Activated naive CD4-positive, alpha-beta T cell treated with anti-CD3 and anti-CD28 coated beads for 36 hours (primary cell): ENCODE measurements at regions of chr12 and their contacts with region 1.

Region 1: GRCh38 chr12:32106517-32107358 is at the start of gene BICD1:
- DNase-seq: peak; percentile 85
- H3K4me3 Mint-ChIP-seq: peak within 1 kb of the TSS; percentile 90
- H3K27ac Mint-ChIP-seq: peak within 1 kb of the TSS; percentile 84
- H3K4me1 Mint-ChIP-seq: peaks cover 18% of the 10 kb centered on the region
- H3K27me3 Mint-ChIP-seq: no peaks in the 10 kb centered on the region
- total RNA-seq, gene BICD1: 14.4 to 16.4 TPM

Region 2: GRCh38 chr12:31325877-31326631 is 780.7 kb before region 1 on chr12 and contains the start of gene SINHCAF:
- CTCF ChIA-PET with region 1: no interaction called
- intact Hi-C with region 1: loop called (anchors 10 kb)
- DNase-seq: peak; percentile 99
- H3K4me3 Mint-ChIP-seq: peak within 1 kb of the TSS; percentile 96
- H3K27ac Mint-ChIP-seq: peak within 1 kb of the TSS; percentile 99
- H3K4me1 Mint-ChIP-seq: peaks cover 20% of the 10 kb centered on the region
- H3K27me3 Mint-ChIP-seq: no peaks in the 10 kb centered on the region
- total RNA-seq, gene SINHCAF: 158 to 169 TPM

Region 3: GRCh38 chr12:31736472-31736871 is 370.3 kb before region 1 on chr12:
- CTCF ChIA-PET with region 1: no interaction called
- intact Hi-C with region 1: loop called (anchors 2 kb)
- DNase-seq: peak; percentile 87
- H3K4me3 Mint-ChIP-seq: no peak overlapping the region
- H3K27ac Mint-ChIP-seq: peak overlapping the region; percentile 86
- H3K4me1 Mint-ChIP-seq: peaks cover 57% of the 10 kb centered on the region
- H3K27me3 Mint-ChIP-seq: no peaks in the 10 kb centered on the region

Region 4: GRCh38 chr12:31959161-31959700 is 147.5 kb before region 1 on chr12 and contains the start of gene RESF1:
- CTCF ChIA-PET with region 1: no interaction called
- intact Hi-C with region 1: loop called (anchors 2 kb)
- DNase-seq: peak; percentile 88
- H3K4me3 Mint-ChIP-seq: peak within 1 kb of the TSS; percentile 94
- H3K27ac Mint-ChIP-seq: peak within 1 kb of the TSS; percentile 99
- H3K4me1 Mint-ChIP-seq: peaks cover 66% of the 10 kb centered on the region
- H3K27me3 Mint-ChIP-seq: no peaks in the 10 kb centered on the region
- total RNA-seq, gene RESF1: 65.6 to 73.5 TPM

Region 5: GRCh38 chr12:32062881-32063280 is 43.9 kb before region 1 on chr12:
- CTCF ChIA-PET with region 1: interaction called, 12 read pairs
- intact Hi-C with region 1: loop called (anchors 2 kb)
- DNase-seq: no peak
- H3K4me3 Mint-ChIP-seq: no peak overlapping the region
- H3K27ac Mint-ChIP-seq: no peak overlapping the region
- H3K4me1 Mint-ChIP-seq: peaks cover 11% of the 10 kb centered on the region
- H3K27me3 Mint-ChIP-seq: no peaks in the 10 kb centered on the region

Region 6: GRCh38 chr12:32181498-32182175 is 74.9 kb after region 1 on chr12:
- CTCF ChIA-PET with region 1: no interaction called
- intact Hi-C with region 1: no loop called
- DNase-seq: no peak
- H3K4me3 Mint-ChIP-seq: no peak overlapping the region
- H3K27ac Mint-ChIP-seq: no peak overlapping the region
- H3K4me1 Mint-ChIP-seq: no peaks in the 10 kb centered on the region
- H3K27me3 Mint-ChIP-seq: no peaks in the 10 kb centered on the region

Region 7: DNA sequence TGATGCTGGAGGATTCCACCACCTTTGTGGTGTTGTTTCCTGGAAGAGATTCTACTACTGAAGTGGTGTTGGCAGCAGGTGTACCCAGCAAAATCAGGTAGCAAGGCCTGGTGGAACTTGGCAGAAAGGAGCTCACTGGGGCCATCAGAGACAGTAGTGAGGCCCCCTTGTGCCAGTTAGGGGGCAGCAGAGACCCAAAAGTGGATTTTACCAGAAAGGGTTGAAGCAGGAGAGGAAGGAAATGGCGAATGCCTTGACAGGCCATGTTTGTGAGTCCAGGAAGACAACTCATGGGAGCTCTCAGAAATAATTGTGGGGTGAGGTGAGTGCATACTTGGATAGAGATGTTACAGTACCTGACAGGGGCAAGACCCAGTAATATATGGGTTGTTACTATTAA is 154.9 kb after region 1 on chr12:
- CTCF ChIA-PET with region 1: no interaction called
- intact Hi-C with region 1: loop called (anchors 1 kb)
- DNase-seq: peak; percentile 46
- H3K4me3 Mint-ChIP-seq: no peak overlapping the region
- H3K27ac Mint-ChIP-seq: no peak overlapping the region
- H3K4me1 Mint-ChIP-seq: peaks cover 21% of the 10 kb centered on the region
- H3K27me3 Mint-ChIP-seq: no peaks in the 10 kb centered on the region

Region 8: DNA sequence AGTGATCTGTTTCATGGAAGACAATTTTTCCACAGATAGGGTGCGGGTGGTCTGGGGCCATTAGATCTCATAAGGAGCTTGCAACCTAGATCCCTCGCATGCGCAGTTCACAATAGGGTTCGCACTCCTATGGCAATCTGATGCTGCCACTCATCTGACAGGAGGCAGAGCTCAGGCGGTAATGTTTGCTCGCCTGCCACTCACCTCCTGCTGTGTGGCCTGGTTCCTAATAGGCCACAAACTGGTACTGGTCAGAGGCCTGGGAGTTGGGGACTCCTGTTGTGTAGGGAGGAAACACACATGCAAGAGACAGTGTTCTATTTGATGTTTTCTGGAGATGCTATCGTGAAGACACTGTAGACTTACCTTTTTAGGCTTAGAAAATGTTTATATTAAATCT is 215.6 kb after region 1 on chr12:
- CTCF ChIA-PET with region 1: no interaction called
- intact Hi-C with region 1: no loop called
- DNase-seq: no peak
- H3K4me3 Mint-ChIP-seq: no peak overlapping the region
- H3K27ac Mint-ChIP-seq: no peak overlapping the region
- H3K4me1 Mint-ChIP-seq: no peaks in the 10 kb centered on the region
- H3K27me3 Mint-ChIP-seq: no peaks in the 10 kb centered on the region

Region 9: DNA sequence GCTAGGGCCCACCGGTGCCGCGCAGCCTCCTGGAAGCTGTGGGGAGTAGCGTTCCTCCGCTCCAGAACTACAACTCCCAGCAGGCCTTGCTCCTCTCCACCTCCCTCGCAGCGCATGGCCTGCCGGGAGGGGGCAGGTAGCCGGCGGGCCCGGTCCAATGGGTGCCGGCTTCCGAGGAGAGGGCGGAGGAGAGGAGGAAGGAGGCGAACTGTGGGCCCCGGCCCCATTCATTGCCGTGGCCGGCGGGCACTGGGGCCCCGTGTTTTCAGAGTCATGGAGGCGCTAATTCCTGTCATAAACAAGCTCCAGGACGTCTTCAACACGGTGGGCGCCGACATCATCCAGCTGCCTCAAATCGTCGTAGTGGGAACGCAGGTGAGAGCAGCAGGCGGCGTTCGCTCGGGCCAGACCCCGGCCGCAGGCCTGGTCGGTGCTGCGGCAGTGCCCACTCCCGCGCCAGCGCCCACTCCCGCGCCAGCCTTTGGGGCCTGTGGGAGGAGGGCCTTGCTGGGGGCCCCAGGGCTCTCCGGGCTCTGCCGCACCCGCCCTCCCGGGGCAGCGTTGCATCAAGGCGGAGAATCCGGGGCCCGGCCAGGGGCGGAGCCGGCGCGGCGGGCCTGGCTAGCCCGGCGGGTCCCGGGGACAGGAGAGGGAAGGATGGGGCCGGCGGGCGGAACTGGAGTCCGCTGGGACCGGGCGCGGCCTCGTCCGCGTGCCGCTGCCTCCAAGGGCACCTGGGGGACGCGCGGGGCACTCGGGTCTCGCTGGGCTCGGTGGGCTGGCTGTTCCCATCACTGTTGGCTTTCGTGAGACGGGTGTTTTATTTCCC is 572.6 kb after region 1 on chr12 and contains the start of gene DNM1L:
- CTCF ChIA-PET with region 1: no interaction called
- intact Hi-C with region 1: loop called (anchors 5 kb)
- DNase-seq: peak; percentile 94
- H3K4me3 Mint-ChIP-seq: peak within 1 kb of the TSS; percentile 81
- H3K27ac Mint-ChIP-seq: peak within 1 kb of the TSS; percentile 82
- H3K4me1 Mint-ChIP-seq: peaks cover 24% of the 10 kb centered on the region
- H3K27me3 Mint-ChIP-seq: no peaks in the 10 kb centered on the region
- total RNA-seq, gene DNM1L: 54.4 to 61.5 TPM

Region 10: GRCh38 chr12:32854097-32854496 is 747.4 kb after region 1 on chr12:
- CTCF ChIA-PET with region 1: no interaction called
- intact Hi-C with region 1: no loop called
- DNase-seq: no peak
- H3K4me3 Mint-ChIP-seq: no peak overlapping the region
- H3K27ac Mint-ChIP-seq: no peak overlapping the region
- H3K4me1 Mint-ChIP-seq: no peaks in the 10 kb centered on the region
- H3K27me3 Mint-ChIP-seq: peaks cover 2% of the 10 kb centered on the region